ENCODE measurements at regions of chr11 and their contacts with region 1.

Region 1: GRCh38 chr11:133134314-133135173 is 397.8 kb downstream of the OPCML start:
- DNase-seq: no peak
- ATAC-seq: no peak
- H3K4me3 Mint-ChIP-seq: no peak overlapping the region
- H3K27ac Mint-ChIP-seq: no peak overlapping the region
- H3K4me1 Mint-ChIP-seq: no peaks in the 10 kb centered on the region
- H3K27me3 Mint-ChIP-seq: peaks cover 3% of the 10 kb centered on the region
- CTCF ChIP-seq: no peak

Region 2: DNA sequence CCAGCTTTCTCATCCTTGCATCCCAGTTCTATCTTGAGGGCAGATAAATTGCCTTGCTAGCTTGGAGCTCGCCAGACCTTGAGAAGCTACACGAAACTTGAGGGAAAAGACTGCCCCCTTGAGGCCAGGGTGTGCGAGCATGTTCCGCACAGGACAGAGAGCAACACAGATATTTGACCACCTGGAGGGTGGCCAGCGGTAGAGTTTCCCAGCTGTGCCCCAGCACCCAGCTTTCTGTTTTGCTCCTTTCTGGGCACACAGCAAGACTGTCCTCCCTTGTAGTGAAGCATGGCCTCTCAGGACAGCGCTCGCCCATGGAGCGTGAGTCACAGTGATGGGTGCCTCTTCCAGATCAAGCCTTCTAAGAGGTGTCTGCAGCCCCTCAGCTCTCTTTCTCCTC is 687.2 kb after region 1 on chr11:
- CTCF ChIA-PET with region 1: no interaction called
- POLR2A ChIA-PET with region 1: no interaction called
- intact Hi-C with region 1: loop called (anchors 5 kb)
- DNase-seq: no peak
- ATAC-seq: no peak
- H3K4me3 Mint-ChIP-seq: no peak overlapping the region
- H3K27ac Mint-ChIP-seq: no peak overlapping the region
- H3K4me1 Mint-ChIP-seq: no peaks in the 10 kb centered on the region
- H3K27me3 Mint-ChIP-seq: no peaks in the 10 kb centered on the region
- CTCF ChIP-seq: no peak

Measured in activated B cell treated with CpG ODN at 0.5 μM for 24 hours (primary cell).